Activated CD8-positive, alpha-beta T cell treated with anti-CD3 and anti-CD28 coated beads for 36 hours (primary cell): ENCODE measurements at regions of chr17 and their contacts with region 1.

Region 1: GRCh38 chr17:30363715-30364202 is 15.0 kb upstream of the CPD start:
- DNase-seq: peak; percentile 95
- ATAC-seq: peak; percentile 94
- H3K4me3 Mint-ChIP-seq: peak overlapping the region; percentile 22
- H3K27ac Mint-ChIP-seq: peak overlapping the region; percentile 82
- H3K4me1 Mint-ChIP-seq: peaks cover 36% of the 10 kb centered on the region
- H3K27me3 Mint-ChIP-seq: no peaks in the 10 kb centered on the region
- CTCF ChIP-seq: no peak

Region 2: DNA sequence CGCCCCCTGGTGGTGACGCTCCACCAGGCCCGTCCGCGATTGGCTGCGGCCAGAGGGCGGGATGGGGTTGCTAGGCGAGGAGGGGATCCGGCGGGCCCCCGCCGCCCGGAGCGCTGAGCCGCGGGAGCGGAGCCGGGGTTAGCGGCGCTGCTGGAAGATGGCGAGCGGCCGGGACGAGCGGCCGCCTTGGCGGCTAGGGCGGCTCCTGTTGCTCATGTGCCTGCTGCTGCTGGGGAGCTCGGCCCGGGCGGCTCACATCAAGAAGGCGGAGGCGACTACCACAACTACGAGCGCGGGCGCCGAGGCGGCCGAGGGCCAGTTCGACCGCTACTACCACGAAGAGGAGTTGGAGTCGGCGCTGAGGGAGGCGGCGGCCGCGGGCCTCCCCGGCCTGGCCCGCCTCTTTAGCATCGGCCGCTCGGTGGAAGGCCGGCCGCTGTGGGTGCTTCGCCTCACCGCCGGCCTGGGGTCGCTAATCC is 15.1 kb after region 1 on chr17 and contains the start of gene CPD:
- CTCF ChIA-PET with region 1: interaction called, 7 read pairs
- POLR2A ChIA-PET with region 1: interaction called, 28 read pairs
- intact Hi-C with region 1: no loop called
- DNase-seq: peak; percentile 97
- ATAC-seq: peak; percentile 93
- H3K4me3 Mint-ChIP-seq: peak within 1 kb of the TSS; percentile 73
- H3K27ac Mint-ChIP-seq: peak within 1 kb of the TSS; percentile 87
- H3K4me1 Mint-ChIP-seq: peaks cover 64% of the 10 kb centered on the region
- H3K27me3 Mint-ChIP-seq: no peaks in the 10 kb centered on the region
- CTCF ChIP-seq: no peak
- total RNA-seq, gene CPD: 25.9 to 26.8 TPM

Region 3: DNA sequence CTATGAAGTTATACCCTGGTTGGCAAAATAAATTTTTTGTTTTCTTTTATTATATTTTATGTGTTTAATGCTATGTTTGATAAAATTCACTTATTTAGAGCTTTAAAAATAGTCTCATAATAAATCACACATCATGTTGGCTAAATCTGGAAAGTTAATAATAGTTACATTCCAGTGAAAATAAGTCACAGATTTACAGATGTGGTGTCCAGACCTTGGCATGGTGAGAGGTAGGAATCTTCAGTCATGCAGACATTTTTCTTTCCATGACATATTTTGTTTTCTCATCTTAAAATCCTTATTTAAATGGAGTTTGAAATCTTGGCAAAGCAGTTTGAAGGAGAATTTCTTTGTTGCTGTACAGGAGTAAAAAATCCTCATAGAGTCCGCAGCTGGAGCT is 65.4 kb after region 1 on chr17:
- CTCF ChIA-PET with region 1: no interaction called
- POLR2A ChIA-PET with region 1: no interaction called
- intact Hi-C with region 1: no loop called
- DNase-seq: no peak
- ATAC-seq: no peak
- H3K4me3 Mint-ChIP-seq: no peak overlapping the region
- H3K27ac Mint-ChIP-seq: no peak overlapping the region
- H3K4me1 Mint-ChIP-seq: no peaks in the 10 kb centered on the region
- H3K27me3 Mint-ChIP-seq: no peaks in the 10 kb centered on the region
- CTCF ChIP-seq: no peak